RWPE1 (cell line): ENCODE measurements at regions of chr4 and their contacts with region 1.

Region 1: GRCh38 chr4:4334798-4335520 is 44.9 kb downstream of the ZBTB49 start:
- DNase-seq: peak; percentile 26
- H3K27ac ChIP-seq: no peak overlapping the region
- CTCF ChIP-seq: peak; percentile 76

Region 2: DNA sequence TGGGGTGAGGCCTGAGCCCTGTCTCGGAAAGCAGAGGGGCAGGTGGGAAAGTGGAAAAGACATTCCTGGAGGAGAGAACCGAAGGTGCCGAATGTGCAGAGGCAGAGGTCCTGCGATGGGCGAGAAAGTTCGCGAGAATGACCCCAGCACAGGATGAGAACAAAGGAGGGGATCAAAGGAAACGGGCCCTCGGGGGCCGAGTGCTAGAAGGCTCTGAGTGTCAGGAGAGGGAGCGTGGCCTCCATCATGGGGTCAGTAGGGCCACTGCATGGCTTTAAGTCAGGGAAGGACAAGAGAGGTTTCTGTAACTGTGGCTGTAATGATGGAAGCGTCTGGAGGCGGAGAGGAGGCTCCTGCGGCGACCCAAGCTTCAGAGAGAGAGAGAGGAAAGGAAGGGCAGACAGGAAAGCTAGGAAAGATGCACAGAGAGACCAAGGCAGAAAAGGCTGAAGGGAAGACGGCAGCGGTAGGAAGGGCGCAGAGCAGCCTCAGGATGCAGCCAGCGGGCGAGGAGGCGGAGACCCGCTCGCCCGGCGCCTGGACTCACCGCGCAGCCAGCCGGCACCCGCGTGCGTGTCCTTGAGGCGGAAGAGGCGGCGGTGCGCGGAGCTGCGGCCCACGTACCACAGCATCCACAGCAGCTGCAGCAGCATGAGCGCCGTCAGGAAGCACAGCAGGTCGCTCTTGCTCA is 108.9 kb before region 1 on chr4:
- CTCF ChIA-PET with region 1: no interaction called
- POLR2A ChIA-PET with region 1: no interaction called
- DNase-seq: no peak
- H3K27ac ChIP-seq: no peak overlapping the region
- CTCF ChIP-seq: no peak

Region 3: DNA sequence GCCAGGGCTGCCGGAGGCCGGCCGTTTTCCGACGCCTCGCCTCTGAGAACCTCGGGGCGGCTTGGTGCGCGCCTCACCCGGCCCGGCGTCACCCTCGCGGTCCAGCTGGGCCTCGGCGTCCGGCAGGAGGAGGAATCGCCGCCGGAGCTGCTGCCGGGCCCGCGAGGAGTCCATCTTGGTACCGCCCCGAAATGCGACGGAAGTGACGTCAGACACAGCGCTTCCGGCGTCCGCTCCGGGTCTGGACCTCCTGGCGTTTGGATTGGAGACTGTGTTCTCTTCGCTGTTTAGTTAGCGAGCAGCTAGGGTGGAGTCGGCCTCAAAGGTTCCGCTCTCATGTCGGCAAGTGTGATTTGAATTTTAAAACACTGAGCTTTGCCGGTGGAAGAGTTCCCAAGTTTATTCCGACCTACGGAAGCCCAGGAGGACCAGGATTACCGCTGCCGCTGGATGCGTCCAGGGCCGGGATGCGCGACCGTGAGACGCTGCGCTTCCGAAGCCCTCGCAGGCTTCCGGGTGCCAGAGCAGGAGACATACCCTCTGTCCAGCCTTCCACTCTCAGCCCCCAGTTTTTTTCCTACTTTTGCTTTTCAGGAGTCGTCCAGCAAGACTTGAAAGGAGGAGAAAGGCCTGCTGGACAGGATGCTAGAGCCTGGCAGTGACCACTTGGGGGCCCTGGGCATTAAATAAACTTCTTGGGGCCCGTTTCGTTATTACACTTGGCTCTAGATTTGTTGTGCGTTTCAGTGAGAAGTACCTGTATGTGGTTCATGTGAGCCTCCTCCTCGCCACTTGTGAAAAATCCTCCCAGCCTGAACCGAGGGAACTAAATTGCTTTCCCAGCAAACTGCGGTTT is 86.7 kb before region 1 on chr4 and contains the start of gene TMEM128:
- CTCF ChIA-PET with region 1: interaction called, 13 read pairs
- POLR2A ChIA-PET with region 1: no interaction called
- DNase-seq: peak; percentile 82
- H3K27ac ChIP-seq: peak within 1 kb of the TSS; percentile 93
- CTCF ChIP-seq: peak; percentile 26